ENCODE measurements at regions of chrX and their contacts with region 1.

Region 1: GRCh38 chrX:123960042-123960611 is 1.4 kb upstream of the STAG2 start:
- DNase-seq: peak; percentile 94
- ATAC-seq: peak; percentile 68
- H3K4me3 Mint-ChIP-seq: peak overlapping the region; percentile 93
- H3K27ac Mint-ChIP-seq: peak overlapping the region; percentile 100
- H3K4me1 Mint-ChIP-seq: peaks cover 14% of the 10 kb centered on the region
- H3K27me3 Mint-ChIP-seq: no peaks in the 10 kb centered on the region

Region 2: GRCh38 chrX:123833387-123833786 is 126.7 kb before region 1 on chrX:
- CTCF ChIA-PET with region 1: interaction called, 7 read pairs
- POLR2A ChIA-PET with region 1: no interaction called
- intact Hi-C with region 1: loop called (anchors 1 to 5 kb)
- DNase-seq: peak; percentile 72
- ATAC-seq: peak; percentile 62
- H3K4me3 Mint-ChIP-seq: no peak overlapping the region
- H3K27ac Mint-ChIP-seq: no peak overlapping the region
- H3K4me1 Mint-ChIP-seq: peaks cover 9% of the 10 kb centered on the region
- H3K27me3 Mint-ChIP-seq: peaks cover 6% of the 10 kb centered on the region

Region 3: DNA sequence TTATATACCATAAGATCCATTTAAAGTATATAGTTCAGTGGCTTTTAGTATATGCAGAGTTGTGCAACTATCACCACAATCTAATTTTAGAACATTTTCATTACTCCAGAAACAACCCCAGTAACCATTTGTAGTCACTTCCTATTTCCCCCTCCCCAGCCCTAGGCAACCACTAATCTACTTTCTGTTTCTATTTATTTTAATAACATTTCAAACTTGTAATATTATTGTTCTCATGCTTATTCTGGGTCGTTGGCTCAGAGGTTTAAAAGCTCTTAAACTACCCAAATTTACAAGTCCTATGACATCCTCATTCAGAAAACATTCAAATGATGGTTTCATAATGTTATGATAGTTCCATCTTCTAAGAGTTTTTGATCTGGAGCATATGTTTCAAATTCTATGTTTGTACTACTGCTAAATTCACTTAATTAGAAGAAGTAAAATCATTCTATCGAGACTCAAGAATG is 81.8 kb before region 1 on chrX:
- CTCF ChIA-PET with region 1: interaction called, 3 read pairs
- POLR2A ChIA-PET with region 1: no interaction called
- intact Hi-C with region 1: loop called in 1 of 2 experiments (anchors 2 kb)
- DNase-seq: no peak
- ATAC-seq: peak; percentile 17
- H3K4me3 Mint-ChIP-seq: peak overlapping the region; percentile 8
- H3K27ac Mint-ChIP-seq: no peak overlapping the region
- H3K4me1 Mint-ChIP-seq: peaks cover 28% of the 10 kb centered on the region
- H3K27me3 Mint-ChIP-seq: no peaks in the 10 kb centered on the region

Region 4: GRCh38 chrX:123920105-123920785 is 39.9 kb before region 1 on chrX:
- CTCF ChIA-PET with region 1: no interaction called
- POLR2A ChIA-PET with region 1: no interaction called
- intact Hi-C with region 1: no loop called
- DNase-seq: no peak
- ATAC-seq: peak; percentile 95
- H3K4me3 Mint-ChIP-seq: no peak overlapping the region
- H3K27ac Mint-ChIP-seq: no peak overlapping the region
- H3K4me1 Mint-ChIP-seq: no peaks in the 10 kb centered on the region
- H3K27me3 Mint-ChIP-seq: no peaks in the 10 kb centered on the region

Region 5: GRCh38 chrX:123943488-123943887 is 16.6 kb before region 1 on chrX:
- CTCF ChIA-PET with region 1: no interaction called
- POLR2A ChIA-PET with region 1: no interaction called
- intact Hi-C with region 1: no loop called
- DNase-seq: no peak
- ATAC-seq: no peak
- H3K4me3 Mint-ChIP-seq: no peak overlapping the region
- H3K27ac Mint-ChIP-seq: no peak overlapping the region
- H3K4me1 Mint-ChIP-seq: no peaks in the 10 kb centered on the region
- H3K27me3 Mint-ChIP-seq: no peaks in the 10 kb centered on the region

Region 6: GRCh38 chrX:124010157-124010556 is 50.0 kb after region 1 on chrX:
- CTCF ChIA-PET with region 1: interaction called, 3 read pairs
- POLR2A ChIA-PET with region 1: interaction called, 4 read pairs
- intact Hi-C with region 1: loop called (anchors 2 to 5 kb)
- DNase-seq: no peak
- ATAC-seq: peak; percentile 81
- H3K4me3 Mint-ChIP-seq: peak overlapping the region; percentile 11
- H3K27ac Mint-ChIP-seq: peak overlapping the region; percentile 17
- H3K4me1 Mint-ChIP-seq: peaks cover 66% of the 10 kb centered on the region
- H3K27me3 Mint-ChIP-seq: no peaks in the 10 kb centered on the region

Region 7: GRCh38 chrX:124086411-124086810 is 126.3 kb after region 1 on chrX:
- CTCF ChIA-PET with region 1: no interaction called
- POLR2A ChIA-PET with region 1: interaction called, 3 read pairs
- intact Hi-C with region 1: loop called (anchors 1 to 2 kb)
- DNase-seq: peak; percentile 58
- ATAC-seq: peak; percentile 96
- H3K4me3 Mint-ChIP-seq: peak overlapping the region; percentile 16
- H3K27ac Mint-ChIP-seq: peak overlapping the region; percentile 66
- H3K4me1 Mint-ChIP-seq: peaks cover 22% of the 10 kb centered on the region
- H3K27me3 Mint-ChIP-seq: no peaks in the 10 kb centered on the region

Region 8: GRCh38 chrX:124239911-124240310 is 279.8 kb after region 1 on chrX:
- CTCF ChIA-PET with region 1: no interaction called
- POLR2A ChIA-PET with region 1: no interaction called
- intact Hi-C with region 1: loop called in 1 of 2 experiments (anchors 1 kb)
- DNase-seq: peak; percentile 72
- ATAC-seq: peak; percentile 79
- H3K4me3 Mint-ChIP-seq: peak overlapping the region; percentile 31
- H3K27ac Mint-ChIP-seq: peak overlapping the region; percentile 75
- H3K4me1 Mint-ChIP-seq: peaks cover 45% of the 10 kb centered on the region
- H3K27me3 Mint-ChIP-seq: peaks cover 2% of the 10 kb centered on the region

Measured in activated CD4-positive, alpha-beta T cell treated with anti-CD3 and anti-CD28 coated beads for 36 hours (primary cell).